AG04449 (cell line): ENCODE measurements at regions of chr14 and their contacts with region 1.

Region 1: GRCh38 chr14:95561001-95561412 is 26.2 kb downstream of the GLRX5 start:
- DNase-seq: peak; percentile 21
- H3K4me3 ChIP-seq: no peak overlapping the region
- CTCF ChIP-seq: peak; percentile 85

Region 2: DNA sequence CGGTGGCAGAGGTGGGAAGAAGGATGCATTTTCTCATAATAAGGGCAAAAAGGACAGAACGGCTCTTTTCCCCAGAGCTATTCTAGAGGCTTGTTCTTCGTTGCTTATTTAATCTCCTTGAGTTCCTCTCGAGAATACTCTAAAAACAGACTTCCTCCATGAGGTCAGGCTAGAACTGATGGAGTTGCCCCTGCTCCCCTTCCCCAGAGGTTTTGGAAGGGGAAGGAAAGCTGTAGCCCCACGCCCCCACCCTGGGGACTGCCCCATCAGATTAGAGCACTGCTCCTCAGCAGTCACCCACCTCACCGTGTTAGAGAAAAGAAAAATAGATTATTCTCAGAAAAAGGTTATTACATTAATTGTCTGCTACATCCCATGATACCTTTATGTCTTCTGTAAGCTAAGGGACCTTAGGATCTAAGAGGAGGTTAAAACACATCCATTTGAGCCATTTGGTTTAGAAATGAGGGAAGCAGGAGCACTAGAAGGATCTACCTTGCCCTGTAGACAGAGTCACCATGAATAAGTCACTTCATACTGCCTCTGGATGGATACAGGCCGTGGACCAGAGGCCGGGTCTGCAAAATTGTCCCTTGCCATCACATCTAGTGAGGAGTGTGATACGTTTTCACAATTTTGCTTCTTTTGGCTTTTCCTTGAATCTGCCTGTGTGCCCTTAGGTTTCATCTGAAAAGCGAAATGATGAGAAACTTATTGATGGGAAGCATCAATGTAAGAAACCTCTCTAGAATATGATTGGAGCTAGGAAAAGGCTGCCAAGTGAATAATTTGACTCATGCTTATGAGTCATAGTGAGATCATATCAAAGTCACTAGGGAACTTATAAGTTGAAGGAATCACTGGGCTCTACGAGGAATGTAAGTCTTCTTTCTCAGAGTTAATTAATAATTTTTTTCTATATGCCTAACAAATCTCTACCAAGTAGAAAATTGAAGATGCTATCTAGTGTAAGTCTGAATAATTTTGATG is 15.5 kb before region 1 on chr14:
- CTCF ChIA-PET with region 1: interaction called, 76 read pairs
- POLR2A ChIA-PET with region 1: no interaction called
- DNase-seq: peak; percentile 71
- H3K4me3 ChIP-seq: no peak overlapping the region
- CTCF ChIP-seq: no peak

Region 3: GRCh38 chr14:95774265-95775160 is 213.5 kb after region 1 on chr14:
- CTCF ChIA-PET with region 1: interaction called, 41 read pairs
- POLR2A ChIA-PET with region 1: no interaction called
- DNase-seq: no peak
- H3K4me3 ChIP-seq: no peak overlapping the region
- CTCF ChIP-seq: peak; percentile 80